ENCODE measurements at regions of chr10 and their contacts with region 1.

Region 1: GRCh38 chr10:127434006-127434405 is 115.1 kb upstream of the NPS start:
- DNase-seq: no peak
- H3K4me3 ChIP-seq: no peak overlapping the region
- H3K27ac ChIP-seq: no peak overlapping the region
- H3K4me1 ChIP-seq: no peaks in the 10 kb centered on the region
- H3K27me3 ChIP-seq: no peaks in the 10 kb centered on the region
- CTCF ChIP-seq: no peak

Region 2: GRCh38 chr10:125783957-125784356 is 1650.0 kb before region 1 on chr10:
- CTCF ChIA-PET with region 1: no interaction called
- dilution Hi-C with region 1: no loop called
- in situ Hi-C with region 1: no loop called
- intact Hi-C with region 1: no loop called
- DNase-seq: no peak
- H3K4me3 ChIP-seq: no peak overlapping the region
- H3K27ac ChIP-seq: no peak overlapping the region
- H3K4me1 ChIP-seq: no peaks in the 10 kb centered on the region
- H3K27me3 ChIP-seq: no peaks in the 10 kb centered on the region
- CTCF ChIP-seq: no peak

Region 3: DNA sequence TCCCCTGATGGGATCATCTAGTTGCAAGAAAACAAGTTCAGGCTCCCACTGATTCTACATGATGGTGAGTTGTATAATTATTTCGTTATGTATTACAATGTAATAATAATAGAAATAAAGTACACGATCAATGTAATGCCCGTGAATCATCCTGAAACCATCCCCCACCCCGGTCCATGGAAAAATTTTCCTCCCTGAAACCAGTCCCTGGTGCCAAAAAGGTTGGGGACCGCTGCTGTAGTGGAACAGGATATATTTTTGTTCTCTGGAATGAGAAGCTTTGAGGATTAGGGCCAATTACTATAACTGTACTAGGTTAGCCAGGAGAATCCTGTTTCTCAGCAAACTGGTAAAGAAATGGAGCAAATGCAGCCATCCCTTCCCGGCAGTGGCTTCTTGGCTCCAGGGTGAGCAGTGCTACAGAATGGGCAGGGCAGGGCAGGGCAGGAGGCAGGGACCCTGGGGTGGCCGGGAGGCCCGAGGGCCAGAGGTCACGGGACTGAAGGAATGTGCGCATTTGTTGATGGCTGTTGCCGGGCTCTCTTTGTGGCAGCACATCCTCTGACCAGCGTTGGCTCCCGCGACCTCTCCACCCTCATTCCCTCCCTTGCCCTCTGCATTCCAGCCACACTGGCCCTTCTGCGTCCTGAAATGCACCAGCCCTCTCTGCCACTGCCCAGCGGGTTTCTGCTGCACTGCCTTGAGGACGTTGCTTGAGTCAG is 47.2 kb before region 1 on chr10:
- CTCF ChIA-PET with region 1: no interaction called
- dilution Hi-C with region 1: loop called (anchors 5 kb)
- in situ Hi-C with region 1: no loop called
- intact Hi-C with region 1: no loop called
- DNase-seq: no peak
- H3K4me3 ChIP-seq: no peak overlapping the region
- H3K27ac ChIP-seq: no peak overlapping the region
- H3K4me1 ChIP-seq: no peaks in the 10 kb centered on the region
- H3K27me3 ChIP-seq: no peaks in the 10 kb centered on the region
- CTCF ChIP-seq: no peak

Region 4: GRCh38 chr10:127527891-127528290 is 93.9 kb after region 1 on chr10:
- CTCF ChIA-PET with region 1: no interaction called
- dilution Hi-C with region 1: loop called (anchors 5 kb)
- in situ Hi-C with region 1: no loop called
- intact Hi-C with region 1: no loop called
- DNase-seq: no peak
- H3K4me3 ChIP-seq: no peak overlapping the region
- H3K27ac ChIP-seq: no peak overlapping the region
- H3K4me1 ChIP-seq: peaks cover 6% of the 10 kb centered on the region
- H3K27me3 ChIP-seq: no peaks in the 10 kb centered on the region
- CTCF ChIP-seq: no peak